Dorsolateral prefrontal cortex (tissue), 120 donors: ENCODE measurements at regions of chr9 and their contacts with region 1.

Region 1: GRCh38 chr9:78121488-78121887 is 89.9 kb upstream of the GNAQ start:
- DNase-seq: peak; percentile 60 to 89 (median 74)
- H3K4me3 ChIP-seq: no peak overlapping the region
- H3K27ac ChIP-seq: peak overlapping the region in 2 of 59 donors; percentile 14 to 18
- H3K27me3 ChIP-seq: no peaks in the 10 kb centered on the region
- CTCF ChIP-seq: peak; percentile 65 to 92 (median 82)

Region 2: DNA sequence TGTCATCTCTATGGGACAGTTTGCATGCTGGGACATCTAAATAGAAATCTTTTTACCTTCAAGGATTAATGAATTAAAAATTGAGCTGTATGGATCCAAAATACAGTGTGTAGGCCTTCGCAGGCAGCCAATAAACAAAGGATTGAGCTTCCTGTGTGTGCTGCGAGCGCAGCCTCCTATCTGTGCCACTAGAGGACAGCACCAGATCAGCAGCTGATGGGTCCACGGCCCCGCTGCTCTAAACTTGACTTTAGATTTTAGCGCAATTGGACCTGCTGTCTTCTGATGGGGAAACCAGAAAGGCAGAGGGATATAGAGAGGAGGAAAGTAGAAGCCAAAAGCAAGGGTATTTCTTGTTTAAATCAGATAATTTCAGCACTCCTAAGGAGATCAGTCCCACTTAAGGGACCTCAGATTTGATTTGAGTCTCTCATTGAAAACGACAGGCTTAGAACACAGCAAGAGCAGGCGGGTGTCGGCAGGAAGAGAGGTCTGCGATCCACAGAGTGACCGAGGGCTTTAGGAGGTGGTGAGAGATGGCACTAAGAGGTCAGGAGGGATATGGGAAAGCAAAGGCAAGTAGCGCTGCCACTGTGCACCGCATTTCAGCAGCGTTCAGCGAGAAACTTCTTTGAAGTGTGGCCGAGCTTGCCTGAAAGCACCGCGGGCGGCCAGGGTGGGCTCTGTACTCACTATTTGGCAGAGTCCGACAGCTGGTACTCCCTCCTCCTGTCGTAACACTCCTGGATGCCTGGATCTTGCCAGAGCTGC is 687.6 kb before region 1 on chr9:
- intact Hi-C with region 1: loop called in 1 of 2 experiments (anchors 10 kb)
- DNase-seq: peak; percentile 37 to 85 (median 80)
- H3K4me3 ChIP-seq: peak overlapping the region in 30 of 59 donors; percentile 4 to 44 (median 24)
- H3K27ac ChIP-seq: peak overlapping the region in 9 of 59 donors; percentile 5 to 63 (median 26)
- H3K27me3 ChIP-seq: no peaks in the 10 kb centered on the region
- CTCF ChIP-seq: peak in 55 of 56 donors; percentile 72 to 99 (median 96)

Region 3: DNA sequence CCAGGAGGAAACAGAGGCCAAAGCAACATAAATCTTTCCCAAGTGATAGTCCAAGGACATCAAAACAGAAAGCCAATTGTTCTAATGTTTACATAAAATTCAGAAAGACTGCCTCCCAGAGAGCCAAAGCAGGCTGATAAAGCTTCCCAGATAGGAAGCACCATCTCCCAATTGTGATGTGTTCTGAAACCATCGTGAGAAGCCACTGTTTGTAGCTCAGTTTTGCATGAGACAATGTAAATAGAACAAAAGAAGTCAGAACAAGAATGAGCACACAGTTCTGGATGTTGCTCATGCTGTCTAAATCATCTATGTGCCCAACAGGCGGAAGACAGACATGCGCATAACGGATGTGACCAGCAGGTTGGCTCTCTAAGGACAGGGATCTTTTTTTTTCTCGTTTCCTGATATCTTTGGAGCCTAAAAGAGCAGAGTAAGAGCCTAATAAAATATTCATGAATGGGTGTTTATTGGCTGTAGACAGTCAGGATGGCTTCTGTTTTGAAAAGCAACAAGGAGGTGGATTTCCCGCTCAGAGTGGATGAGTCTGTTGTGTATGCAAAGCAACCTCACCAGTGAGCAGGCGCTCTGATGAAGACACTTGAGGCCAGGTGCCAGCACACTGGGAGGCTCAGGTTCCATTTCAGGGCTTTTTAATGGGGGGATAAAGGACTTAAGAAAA is 587.0 kb before region 1 on chr9:
- intact Hi-C with region 1: loop called in 1 of 2 experiments (anchors 10 kb)
- DNase-seq: peak in 5 of 10 donors; percentile 15 to 69 (median 52)
- H3K4me3 ChIP-seq: peak overlapping the region in 15 of 59 donors; percentile 0 to 33 (median 9)
- H3K27ac ChIP-seq: peak overlapping the region; percentile 48 to 98 (median 93)
- H3K27me3 ChIP-seq: no peaks in the 10 kb centered on the region
- CTCF ChIP-seq: peak in 16 of 56 donors; percentile 7 to 44 (median 20)

Region 4: GRCh38 chr9:77751341-77752091 is 370.0 kb before region 1 on chr9:
- intact Hi-C with region 1: loop called in 1 of 2 experiments (anchors 10 kb)
- DNase-seq: peak in 1 of 10 donors; percentile 9
- H3K4me3 ChIP-seq: peak overlapping the region in 20 of 59 donors; percentile 3 to 38 (median 21)
- H3K27ac ChIP-seq: peak overlapping the region in 54 of 59 donors; percentile 1 to 84 (median 62)
- H3K27me3 ChIP-seq: no peaks in the 10 kb centered on the region
- CTCF ChIP-seq: peak; percentile 48 to 85 (median 70)

Region 5: GRCh38 chr9:77841739-77842386 is 279.6 kb before region 1 on chr9:
- intact Hi-C with region 1: loop called in 1 of 2 experiments (anchors 5 kb)
- DNase-seq: no peak
- H3K4me3 ChIP-seq: peak overlapping the region in 2 of 59 donors; percentile 7 to 10
- H3K27ac ChIP-seq: peak overlapping the region in 52 of 59 donors; percentile 3 to 82 (median 61)
- H3K27me3 ChIP-seq: no peaks in the 10 kb centered on the region
- CTCF ChIP-seq: peak in 55 of 56 donors; percentile 22 to 77 (median 52)

Region 6: DNA sequence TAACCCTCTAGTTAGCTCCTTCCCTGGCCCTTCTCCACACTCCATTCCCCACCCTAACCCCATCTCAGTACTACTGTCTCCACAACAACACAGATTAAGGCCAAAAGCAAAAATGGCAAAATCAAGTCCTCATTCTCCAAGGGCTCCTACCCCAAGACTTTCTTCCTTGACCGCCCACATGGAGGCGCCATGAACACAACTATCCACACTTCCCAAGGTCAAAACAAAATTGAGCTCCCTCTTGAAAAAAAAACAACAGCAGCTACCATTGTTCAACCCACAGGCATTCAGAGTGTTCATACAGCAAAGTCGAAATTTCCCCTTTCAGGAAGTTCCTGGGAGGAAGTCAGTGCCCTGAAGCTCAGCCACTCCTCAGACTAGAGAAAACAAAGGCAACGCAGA is 144.3 kb before region 1 on chr9:
- intact Hi-C with region 1: loop called (anchors 2 to 5 kb)
- DNase-seq: peak in 9 of 10 donors; percentile 46 to 75 (median 66)
- H3K4me3 ChIP-seq: peak overlapping the region in 9 of 59 donors; percentile 1 to 38 (median 23)
- H3K27ac ChIP-seq: peak overlapping the region in 58 of 59 donors; percentile 26 to 89 (median 78)
- H3K27me3 ChIP-seq: no peaks in the 10 kb centered on the region
- CTCF ChIP-seq: peak; percentile 34 to 83 (median 68)

Region 7: DNA sequence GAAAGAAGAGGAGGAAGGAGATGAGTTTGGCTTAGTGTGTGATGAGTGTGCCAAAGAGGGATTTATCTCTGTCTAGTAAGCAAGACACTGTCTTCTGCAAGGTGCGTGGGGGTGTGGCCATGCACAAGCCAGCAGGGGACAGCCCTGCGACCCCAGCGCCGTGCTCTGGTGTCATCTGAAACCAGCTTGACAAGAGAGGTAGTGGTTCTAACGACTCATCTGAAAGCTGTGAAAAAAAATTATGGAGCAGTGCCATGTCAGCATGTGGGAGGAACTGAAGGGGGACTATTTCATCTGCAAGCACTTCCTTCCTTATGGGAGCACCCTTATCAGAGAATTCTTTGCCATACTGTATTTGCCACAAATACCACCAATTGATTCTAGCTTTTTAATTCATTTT is 574.0 kb after region 1 on chr9:
- intact Hi-C with region 1: no loop called
- DNase-seq: no peak
- H3K4me3 ChIP-seq: no peak overlapping the region
- H3K27ac ChIP-seq: no peak overlapping the region
- H3K27me3 ChIP-seq: peaks cover 0 to 4% (median 0%) of the 10 kb centered on the region in 45 donors
- CTCF ChIP-seq: no peak